Activated T-helper 1 cell treated with anti-CD3 and anti-CD28 coated beads, Interleukin-12 subunit alpha, Interleukin-12 subunit beta, Interleukin-2, Interleukin-4 antibody, amounts not matched to agents 30 ng/mL and 10 ng/mL and 1 ng/mL, durations not matched to agents 14 hours and 24 hours and 36 hours (primary cell): ENCODE measurements at regions of chr5 and their contacts with region 1.

Region 1: GRCh38 chr5:95870105-95870672 is 47.7 kb upstream of the GLRX start:
- DNase-seq: peak; percentile 20
- H3K4me3 Mint-ChIP-seq: peak overlapping the region; percentile 64
- H3K27ac Mint-ChIP-seq: peak overlapping the region; percentile 97
- H3K4me1 Mint-ChIP-seq: peaks cover 55% of the 10 kb centered on the region
- H3K27me3 Mint-ChIP-seq: no peaks in the 10 kb centered on the region

Region 2: GRCh38 chr5:95760273-95761191 is 109.7 kb before region 1 on chr5:
- intact Hi-C with region 1: no loop called
- DNase-seq: no peak
- H3K4me3 Mint-ChIP-seq: peak overlapping the region; percentile 52
- H3K27ac Mint-ChIP-seq: peak overlapping the region; percentile 45
- H3K4me1 Mint-ChIP-seq: peaks cover 30% of the 10 kb centered on the region
- H3K27me3 Mint-ChIP-seq: peaks cover 22% of the 10 kb centered on the region

Region 3: GRCh38 chr5:95822542-95823181 is 47.5 kb before region 1 on chr5 and contains the start of gene GLRX:
- intact Hi-C with region 1: loop called (anchors 2 kb)
- DNase-seq: peak; percentile 55
- H3K4me3 Mint-ChIP-seq: peak within 1 kb of the TSS; percentile 91
- H3K27ac Mint-ChIP-seq: peak within 1 kb of the TSS; percentile 91
- H3K4me1 Mint-ChIP-seq: peaks cover 68% of the 10 kb centered on the region
- H3K27me3 Mint-ChIP-seq: no peaks in the 10 kb centered on the region
- total RNA-seq, gene GLRX: 17.2 and 18.3 TPM in 2 replicates

Region 4: DNA sequence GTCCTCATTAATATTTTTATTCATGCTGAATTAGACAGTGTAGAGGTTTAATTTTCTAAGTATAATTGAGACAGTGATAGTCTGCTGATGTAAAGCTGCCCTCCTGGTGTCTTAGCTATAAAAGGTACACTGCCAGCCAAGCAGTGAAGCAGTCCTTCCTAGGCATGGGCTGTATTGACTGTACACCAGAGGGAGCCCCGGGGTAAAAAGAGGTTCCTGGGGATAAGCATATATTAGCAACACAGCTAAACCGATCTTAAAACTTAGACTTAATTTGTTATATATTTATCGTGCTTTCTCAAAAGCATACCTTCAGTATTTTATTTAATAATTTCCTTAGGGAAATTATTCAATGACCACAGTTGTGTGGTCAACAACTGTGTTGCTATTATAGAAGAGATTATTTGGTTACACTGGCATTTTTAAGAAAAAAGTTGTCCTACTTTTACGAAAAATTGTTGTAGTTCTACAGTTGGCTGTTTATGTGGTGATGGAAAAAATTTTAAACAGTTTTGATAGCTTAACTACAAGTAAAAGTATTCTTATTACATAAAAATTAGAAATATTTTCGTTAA is 22.7 kb after region 1 on chr5:
- intact Hi-C with region 1: loop called (anchors 2 kb)
- DNase-seq: peak; percentile 15
- H3K4me3 Mint-ChIP-seq: no peak overlapping the region
- H3K27ac Mint-ChIP-seq: no peak overlapping the region
- H3K4me1 Mint-ChIP-seq: peaks cover 25% of the 10 kb centered on the region
- H3K27me3 Mint-ChIP-seq: no peaks in the 10 kb centered on the region

Region 5: GRCh38 chr5:96113170-96113939 is 243.2 kb after region 1 on chr5:
- intact Hi-C with region 1: loop called (anchors 2 kb)
- DNase-seq: no peak
- H3K4me3 Mint-ChIP-seq: no peak overlapping the region
- H3K27ac Mint-ChIP-seq: peak overlapping the region; percentile 50
- H3K4me1 Mint-ChIP-seq: peaks cover 42% of the 10 kb centered on the region
- H3K27me3 Mint-ChIP-seq: no peaks in the 10 kb centered on the region

Region 6: DNA sequence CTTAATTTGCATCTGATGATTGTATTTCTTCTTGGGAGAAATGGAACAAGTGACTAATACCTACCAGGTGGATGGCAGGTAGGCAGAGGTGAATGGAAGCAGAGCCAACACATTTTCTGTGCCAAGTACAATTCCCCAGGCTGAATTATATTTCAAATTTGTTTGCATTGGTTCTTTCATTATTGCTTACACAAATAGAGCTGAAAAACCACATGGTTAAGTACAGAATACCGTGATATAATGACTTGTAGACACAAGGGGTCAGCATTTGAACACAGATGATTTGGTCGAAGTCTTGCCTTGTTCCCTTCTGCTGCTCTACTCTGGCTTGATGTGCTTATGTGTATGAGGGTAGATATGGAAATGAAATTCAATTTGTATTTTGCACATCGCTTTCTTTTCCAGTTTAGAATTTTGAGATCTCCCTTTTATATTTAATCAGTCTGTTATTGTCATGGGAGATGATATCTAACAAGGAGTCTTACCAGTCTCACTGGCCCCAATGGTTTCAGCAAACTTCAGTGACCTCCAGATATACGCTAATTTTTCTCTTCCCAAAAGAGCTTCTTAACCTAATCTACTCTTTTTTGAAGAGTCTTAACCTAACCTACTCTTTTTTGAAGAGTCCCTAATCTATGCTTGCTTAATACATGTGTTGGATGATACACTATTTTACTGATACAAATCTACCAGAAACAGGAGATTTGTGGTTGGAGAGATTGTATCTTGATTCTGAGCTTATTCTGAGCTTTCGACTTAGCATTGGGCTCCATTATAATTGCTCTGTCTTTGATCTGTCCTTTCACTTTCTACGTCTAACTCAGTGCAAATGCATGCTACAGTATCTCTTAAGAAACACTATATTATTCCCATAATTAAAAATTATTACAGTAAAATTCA is 474.7 kb after region 1 on chr5:
- intact Hi-C with region 1: loop called (anchors 1 kb)
- DNase-seq: no peak
- H3K4me3 Mint-ChIP-seq: no peak overlapping the region
- H3K27ac Mint-ChIP-seq: peak overlapping the region; percentile 1
- H3K4me1 Mint-ChIP-seq: peaks cover 22% of the 10 kb centered on the region
- H3K27me3 Mint-ChIP-seq: peaks cover 35% of the 10 kb centered on the region